ENCODE measurements at regions of chr9 and their contacts with region 1.

Region 1: DNA sequence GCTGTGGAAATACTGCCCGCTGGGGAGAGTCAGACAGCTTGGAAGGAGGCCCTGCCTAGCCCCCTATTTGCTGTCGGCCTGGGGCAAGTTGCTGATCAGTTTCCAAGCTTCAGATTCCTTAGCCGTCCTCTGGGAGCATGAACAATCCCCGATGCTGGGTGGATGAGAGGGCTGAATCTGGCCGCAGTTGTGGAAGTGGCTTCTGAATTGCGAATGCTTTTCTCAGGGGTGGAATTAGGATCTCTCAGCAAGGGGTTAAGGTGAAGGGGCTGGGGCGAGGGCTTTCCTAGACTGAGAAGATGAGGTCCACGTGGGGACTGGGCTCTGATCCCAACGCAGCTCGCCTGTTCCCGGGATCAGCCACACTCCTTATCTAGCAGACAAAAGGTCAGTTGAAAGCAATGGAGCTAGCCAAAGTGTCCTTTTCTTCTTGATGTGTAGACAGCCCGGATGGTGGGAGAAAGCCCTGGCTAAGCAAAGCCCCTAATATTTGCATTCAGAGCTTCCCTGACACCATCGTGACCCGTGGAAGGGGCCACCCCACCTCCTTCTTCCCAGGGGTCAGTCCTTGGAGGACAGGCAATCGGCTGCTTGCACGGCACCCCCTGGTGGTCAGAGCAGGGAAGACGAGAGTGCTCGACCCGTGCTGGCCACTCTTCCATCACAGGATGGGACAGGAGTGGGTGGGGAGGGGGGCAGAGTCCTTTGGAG is 54.9 kb downstream of the COL15A1 start:
- DNase-seq: peak; percentile 57
- H3K4me3 ChIP-seq: no peak overlapping the region
- H3K27ac ChIP-seq: peak overlapping the region in 1 of 2 donors; percentile 30
- H3K4me1 ChIP-seq: no peaks in the 10 kb centered on the region
- H3K27me3 ChIP-seq: no peaks in the 10 kb centered on the region
- CTCF ChIP-seq: peak; percentile 66 to 84 (median 78)
- POLR2A ChIP-seq: no peak

Region 2: DNA sequence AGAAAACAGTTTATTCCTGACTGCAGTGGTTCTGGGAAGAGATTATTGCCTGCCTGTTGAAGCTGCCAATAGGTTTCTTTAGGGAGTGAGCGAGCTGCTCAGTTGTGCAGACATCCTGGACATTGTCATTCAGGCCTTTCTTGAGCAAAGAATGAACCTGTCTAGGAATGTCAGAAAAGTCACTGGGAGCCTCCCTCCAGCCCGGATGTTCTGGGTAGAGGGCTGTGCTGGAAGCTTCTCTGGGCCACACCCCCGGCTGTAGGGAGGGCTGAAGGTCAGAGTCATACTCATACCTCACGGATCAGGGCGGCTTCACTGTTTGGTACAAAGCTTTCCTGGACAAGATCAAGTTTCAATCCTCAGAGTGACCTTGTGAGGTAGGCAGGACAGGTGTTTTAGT is 709.7 kb before region 1 on chr9:
- intact Hi-C with region 1: no loop called
- DNase-seq: no peak
- H3K4me3 ChIP-seq: no peak overlapping the region
- H3K27ac ChIP-seq: no peak overlapping the region
- H3K4me1 ChIP-seq: no peaks in the 10 kb centered on the region
- H3K27me3 ChIP-seq: no peaks in the 10 kb centered on the region
- CTCF ChIP-seq: no peak
- POLR2A ChIP-seq: no peak

Region 3: GRCh38 chr9:98678242-98678842 is 320.3 kb before region 1 on chr9:
- intact Hi-C with region 1: no loop called
- DNase-seq: no peak
- H3K4me3 ChIP-seq: no peak overlapping the region
- H3K27ac ChIP-seq: no peak overlapping the region
- H3K4me1 ChIP-seq: no peaks in the 10 kb centered on the region
- H3K27me3 ChIP-seq: no peaks in the 10 kb centered on the region
- CTCF ChIP-seq: peak in 1 of 4 experiments; percentile 11
- POLR2A ChIP-seq: no peak

Region 4: GRCh38 chr9:98848450-98849149 is 150.0 kb before region 1 on chr9:
- intact Hi-C with region 1: loop called (anchors 5 kb)
- DNase-seq: peak; percentile 95
- H3K4me3 ChIP-seq: peak overlapping the region in 1 of 2 donors; percentile 16
- H3K27ac ChIP-seq: peak overlapping the region in 1 of 2 donors; percentile 22
- H3K4me1 ChIP-seq: no peaks in the 10 kb centered on the region
- H3K27me3 ChIP-seq: no peaks in the 10 kb centered on the region
- CTCF ChIP-seq: peak; percentile 82 to 94 (median 90)
- POLR2A ChIP-seq: no peak

Region 5: GRCh38 chr9:98860871-98861293 is 137.7 kb before region 1 on chr9:
- intact Hi-C with region 1: loop called (anchors 2 kb)
- DNase-seq: no peak
- H3K4me3 ChIP-seq: no peak overlapping the region
- H3K27ac ChIP-seq: peak overlapping the region in 1 of 2 donors; percentile 5
- H3K4me1 ChIP-seq: no peaks in the 10 kb centered on the region
- H3K27me3 ChIP-seq: no peaks in the 10 kb centered on the region
- CTCF ChIP-seq: peak in 2 of 4 experiments; percentile 23 to 46
- POLR2A ChIP-seq: no peak

Region 6: GRCh38 chr9:98974994-98975712 is 23.4 kb before region 1 on chr9:
- intact Hi-C with region 1: loop called (anchors 2 kb)
- DNase-seq: peak; percentile 75
- H3K4me3 ChIP-seq: no peak overlapping the region
- H3K27ac ChIP-seq: no peak overlapping the region
- H3K4me1 ChIP-seq: no peaks in the 10 kb centered on the region
- H3K27me3 ChIP-seq: no peaks in the 10 kb centered on the region
- CTCF ChIP-seq: peak; percentile 89 to 97 (median 95)
- POLR2A ChIP-seq: no peak

Region 7: GRCh38 chr9:99140685-99141314 is 142.2 kb after region 1 on chr9:
- intact Hi-C with region 1: loop called (anchors 5 kb)
- DNase-seq: peak; percentile 36
- H3K4me3 ChIP-seq: no peak overlapping the region
- H3K27ac ChIP-seq: no peak overlapping the region
- H3K4me1 ChIP-seq: no peaks in the 10 kb centered on the region
- H3K27me3 ChIP-seq: no peaks in the 10 kb centered on the region
- CTCF ChIP-seq: peak; percentile 61 to 83 (median 72)
- POLR2A ChIP-seq: no peak

Measured in prostate gland (tissue), 2 donors.